ENCODE measurements at regions of chr5 and their contacts with region 1.

Region 1: DNA sequence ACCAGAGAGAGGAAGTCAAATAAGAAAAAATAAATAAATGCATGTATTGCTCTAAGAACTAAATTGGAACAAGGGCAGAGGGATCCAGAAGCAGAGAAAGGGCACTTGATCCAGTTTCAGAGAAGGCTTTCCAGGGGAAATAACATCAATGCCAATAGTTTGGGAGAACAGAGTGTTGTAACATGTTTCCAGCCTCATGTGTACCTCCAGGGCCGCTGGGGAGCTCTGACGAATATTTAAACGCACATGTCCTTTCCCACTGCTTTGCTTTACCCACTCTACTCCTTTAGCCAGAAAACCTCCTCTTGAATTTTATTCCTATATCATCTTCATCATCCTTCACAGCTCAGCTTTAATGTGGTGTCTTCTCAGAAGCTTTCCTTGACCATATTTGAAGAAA is 233.7 kb downstream of the ENC1 start:
- DNase-seq: no peak
- ATAC-seq: no peak
- H3K4me3 ChIP-seq: no peak overlapping the region
- H3K4me3 Mint-ChIP-seq: no peak overlapping the region
- H3K27ac ChIP-seq: no peak overlapping the region
- H3K27ac Mint-ChIP-seq: no peak overlapping the region
- H3K4me1 ChIP-seq: peaks cover 11% of the 10 kb centered on the region
- H3K4me1 Mint-ChIP-seq: peaks cover 25 to 27% of the 10 kb centered on the region in 2 donors
- H3K27me3 ChIP-seq: no peaks in the 10 kb centered on the region
- H3K27me3 Mint-ChIP-seq: peaks cover 12 to 18% of the 10 kb centered on the region in 2 donors
- CTCF ChIP-seq: no peak

Region 2: DNA sequence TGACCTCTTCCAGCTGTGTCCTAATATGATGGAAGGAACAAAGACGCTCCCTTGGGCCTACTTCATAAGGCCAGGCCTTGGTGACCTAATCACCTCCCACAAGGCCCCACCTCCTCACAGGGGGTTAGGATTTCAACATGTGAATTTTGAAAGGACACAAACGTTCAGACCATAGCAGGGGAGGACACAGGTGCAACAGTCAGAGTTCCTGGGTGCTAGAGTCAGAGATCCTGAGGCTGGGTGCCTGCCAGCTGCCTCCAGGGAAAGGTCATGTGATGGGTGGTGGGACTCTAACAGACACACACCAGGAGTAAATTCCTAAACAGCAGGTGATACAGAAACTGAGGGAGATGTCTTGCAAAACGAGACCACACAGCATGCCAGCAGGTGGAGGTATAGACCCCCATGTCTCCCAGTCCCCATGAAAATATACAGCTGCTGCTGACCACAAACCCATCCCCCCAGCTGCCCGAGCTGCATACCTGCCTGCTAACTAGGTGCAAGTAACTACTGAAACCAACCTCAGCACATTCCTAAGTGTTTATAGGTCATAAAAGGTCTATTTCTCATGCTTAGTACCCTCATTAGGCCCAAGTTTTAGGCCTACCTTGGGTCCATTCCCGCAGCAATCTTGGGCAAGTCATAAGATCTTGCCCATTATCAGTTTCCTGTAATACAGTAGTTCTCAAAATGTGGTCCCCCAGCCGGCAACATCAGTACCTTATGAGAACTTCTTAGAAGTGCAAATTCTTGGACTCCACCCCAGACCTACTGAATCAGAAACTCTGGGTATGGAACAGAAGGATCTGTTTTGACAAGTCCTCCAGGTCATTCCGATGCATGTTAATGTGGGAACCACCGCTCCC is 11.7 kb before region 1 on chr5:
- intact Hi-C with region 1: loop called (anchors 1 kb)
- DNase-seq: peak in 1 of 2 donors; percentile 10
- ATAC-seq: no peak
- H3K4me3 ChIP-seq: no peak overlapping the region
- H3K4me3 Mint-ChIP-seq: no peak overlapping the region
- H3K27ac ChIP-seq: no peak overlapping the region
- H3K27ac Mint-ChIP-seq: no peak overlapping the region
- H3K4me1 ChIP-seq: no peaks in the 10 kb centered on the region
- H3K4me1 Mint-ChIP-seq: peaks cover 0 to 7% of the 10 kb centered on the region in 2 donors
- H3K27me3 ChIP-seq: no peaks in the 10 kb centered on the region
- H3K27me3 Mint-ChIP-seq: no peaks in the 10 kb centered on the region
- CTCF ChIP-seq: no peak

Region 3: GRCh38 chr5:74595143-74595925 is 188.5 kb after region 1 on chr5:
- intact Hi-C with region 1: no loop called
- DNase-seq: no peak
- ATAC-seq: no peak
- H3K4me3 ChIP-seq: no peak overlapping the region
- H3K4me3 Mint-ChIP-seq: no peak overlapping the region
- H3K27ac ChIP-seq: no peak overlapping the region
- H3K27ac Mint-ChIP-seq: no peak overlapping the region
- H3K4me1 ChIP-seq: no peaks in the 10 kb centered on the region
- H3K4me1 Mint-ChIP-seq: no peaks in the 10 kb centered on the region
- H3K27me3 ChIP-seq: no peaks in the 10 kb centered on the region
- H3K27me3 Mint-ChIP-seq: peaks cover 7 to 33% of the 10 kb centered on the region in 2 donors
- CTCF ChIP-seq: no peak

Measured in natural killer cell (primary cell).